Activated CD4-positive, alpha-beta T cell treated with anti-CD3 and anti-CD28 coated beads, Interleukin-2, amount 10 ng/mL, durations not matched to agents 24 days and 14 days (primary cell): ENCODE measurements at regions of chr9 and their contacts with region 1.

Region 1: GRCh38 chr9:120714088-120714845 is at the start of gene MEGF9:
- DNase-seq: peak; percentile 99
- H3K4me3 Mint-ChIP-seq: peak within 1 kb of the TSS; percentile 94
- H3K27ac Mint-ChIP-seq: peak within 1 kb of the TSS; percentile 88
- H3K4me1 Mint-ChIP-seq: peaks cover 36% of the 10 kb centered on the region
- H3K27me3 Mint-ChIP-seq: no peaks in the 10 kb centered on the region
- total RNA-seq, gene MEGF9: 4.5 and 4.9 TPM in 2 replicates

Region 2: DNA sequence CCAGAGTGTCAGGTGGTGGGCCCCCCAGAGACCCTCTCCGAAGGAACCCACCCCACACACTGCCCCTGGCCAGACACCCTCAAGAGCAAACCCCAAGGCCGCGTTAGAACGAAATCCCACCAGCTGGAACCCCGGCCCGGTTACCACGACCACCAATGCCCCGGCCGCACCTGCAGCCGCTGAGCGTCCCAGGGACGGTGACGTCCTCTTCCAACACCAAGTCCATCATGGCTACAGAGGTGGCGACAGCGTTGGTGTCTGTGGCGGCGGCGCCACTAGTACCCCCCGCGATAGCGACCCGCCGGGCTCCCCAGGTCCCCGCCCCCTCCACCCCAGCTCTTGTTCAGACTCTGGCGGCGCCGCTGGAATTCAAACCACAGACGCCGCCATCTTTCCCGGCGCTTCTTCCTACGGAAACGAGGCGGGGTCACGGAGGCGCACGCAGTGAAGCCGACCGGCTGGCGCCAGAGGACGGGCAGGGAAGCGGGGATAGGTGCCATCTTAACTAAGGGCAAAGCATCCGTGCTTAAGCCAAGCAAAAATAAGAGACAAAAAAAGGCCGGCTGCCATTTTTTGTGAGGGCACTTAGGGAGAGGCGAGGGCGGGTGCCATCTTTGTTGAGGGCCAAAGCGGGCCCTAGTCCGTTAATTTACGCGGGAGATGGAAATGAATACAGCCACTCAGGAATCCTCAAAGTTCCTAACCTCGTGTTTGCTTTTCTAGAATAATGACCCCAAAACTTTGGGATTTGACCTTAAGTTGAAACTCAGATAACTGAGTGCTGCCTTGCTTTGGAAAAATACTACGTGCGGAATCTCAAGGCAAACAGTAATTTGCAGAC is 134.3 kb before region 1 on chr9 and contains the start of gene CDK5RAP2:
- intact Hi-C with region 1: loop called (anchors 1 kb)
- DNase-seq: peak; percentile 98
- H3K4me3 Mint-ChIP-seq: peak within 1 kb of the TSS; percentile 98
- H3K27ac Mint-ChIP-seq: peak within 1 kb of the TSS; percentile 94
- H3K4me1 Mint-ChIP-seq: peaks cover 36% of the 10 kb centered on the region
- H3K27me3 Mint-ChIP-seq: no peaks in the 10 kb centered on the region
- total RNA-seq, gene CDK5RAP2: 69.3 and 70.0 TPM in 2 replicates

Region 3: GRCh38 chr9:120692901-120693699 is 21.2 kb before region 1 on chr9:
- intact Hi-C with region 1: loop called (anchors 2 kb)
- DNase-seq: peak; percentile 53
- H3K4me3 Mint-ChIP-seq: no peak overlapping the region
- H3K27ac Mint-ChIP-seq: no peak overlapping the region
- H3K4me1 Mint-ChIP-seq: peaks cover 29% of the 10 kb centered on the region
- H3K27me3 Mint-ChIP-seq: no peaks in the 10 kb centered on the region

Region 4: DNA sequence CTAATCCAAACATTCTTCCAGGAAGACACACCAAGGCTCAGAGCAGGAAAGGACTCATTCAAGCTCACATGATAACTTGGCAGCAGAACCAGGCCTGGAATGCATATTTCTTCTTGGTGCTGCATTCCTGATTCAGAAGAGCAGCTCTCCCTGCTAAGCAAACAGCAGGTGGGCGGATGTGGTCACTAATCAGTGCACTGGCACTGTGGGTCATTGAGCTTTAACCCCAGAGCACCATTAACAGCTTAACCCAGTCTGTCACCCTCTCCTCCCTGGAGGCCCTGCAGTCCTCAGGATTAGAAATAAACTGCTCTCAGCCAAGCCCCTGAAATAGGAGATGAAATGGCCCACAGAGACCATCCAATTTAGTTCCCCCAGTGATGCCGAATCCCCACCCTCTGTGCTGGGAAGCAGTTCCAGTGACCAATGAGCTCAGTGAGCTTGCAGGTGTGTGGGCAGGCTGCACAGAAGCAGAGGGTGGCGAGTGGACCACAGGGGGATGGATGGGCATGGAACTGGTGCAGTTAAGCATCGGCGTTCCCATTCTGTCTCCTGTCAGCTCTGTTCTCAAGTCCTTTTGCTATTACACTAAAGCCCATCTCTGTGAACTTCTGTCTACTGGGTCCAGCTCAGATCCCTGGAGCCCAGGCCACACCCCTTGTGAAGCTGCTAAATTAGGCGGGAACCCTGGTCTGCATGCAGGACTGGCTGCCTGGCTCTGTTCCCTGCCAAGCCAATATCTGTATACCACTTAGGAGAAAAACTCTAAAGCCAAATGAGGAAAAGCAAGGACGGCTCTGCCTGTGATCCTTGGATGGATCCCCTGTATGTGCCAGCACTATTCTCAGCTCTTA is 16.6 kb after region 1 on chr9:
- intact Hi-C with region 1: no loop called
- DNase-seq: no peak
- H3K4me3 Mint-ChIP-seq: no peak overlapping the region
- H3K27ac Mint-ChIP-seq: no peak overlapping the region
- H3K4me1 Mint-ChIP-seq: peaks cover 14% of the 10 kb centered on the region
- H3K27me3 Mint-ChIP-seq: no peaks in the 10 kb centered on the region

Region 5: DNA sequence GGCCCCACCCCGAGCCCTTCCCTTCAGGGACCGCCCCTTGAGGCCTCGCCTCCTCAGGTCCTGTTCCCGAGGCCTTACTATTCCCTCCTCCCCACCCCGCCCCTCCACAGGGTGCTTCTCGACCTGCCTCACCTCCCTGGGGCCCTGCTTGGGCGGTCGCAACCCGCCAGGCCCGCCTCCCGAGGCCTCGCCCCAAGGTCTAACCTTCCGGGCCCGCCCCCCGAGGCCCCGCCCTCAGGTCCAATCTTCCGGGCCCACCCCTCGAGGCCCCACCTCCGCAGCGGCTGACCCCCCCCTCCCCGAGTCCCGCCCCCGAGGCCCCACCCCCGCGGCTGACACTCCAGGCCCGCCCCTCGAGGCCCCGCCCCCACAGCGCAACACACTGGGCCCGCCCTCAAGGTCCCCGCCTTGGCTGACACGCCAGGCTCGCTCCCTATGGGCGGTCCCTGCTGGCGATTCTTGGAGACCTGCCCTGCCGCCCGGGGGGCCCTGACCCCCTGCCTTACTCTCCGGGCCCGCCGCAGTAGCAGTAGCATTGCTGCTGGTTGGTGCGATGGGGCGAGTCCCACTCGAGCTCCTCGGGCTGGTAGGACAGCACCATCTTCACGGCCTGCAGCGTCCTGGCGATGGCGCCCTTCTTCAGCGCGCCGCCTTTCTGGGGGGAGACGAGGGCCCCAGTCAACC is 154.6 kb after region 1 on chr9:
- intact Hi-C with region 1: loop called (anchors 5 kb)
- DNase-seq: peak; percentile 98
- H3K4me3 Mint-ChIP-seq: peak overlapping the region; percentile 90
- H3K27ac Mint-ChIP-seq: peak overlapping the region; percentile 95
- H3K4me1 Mint-ChIP-seq: peaks cover 40% of the 10 kb centered on the region
- H3K27me3 Mint-ChIP-seq: no peaks in the 10 kb centered on the region

Region 6: DNA sequence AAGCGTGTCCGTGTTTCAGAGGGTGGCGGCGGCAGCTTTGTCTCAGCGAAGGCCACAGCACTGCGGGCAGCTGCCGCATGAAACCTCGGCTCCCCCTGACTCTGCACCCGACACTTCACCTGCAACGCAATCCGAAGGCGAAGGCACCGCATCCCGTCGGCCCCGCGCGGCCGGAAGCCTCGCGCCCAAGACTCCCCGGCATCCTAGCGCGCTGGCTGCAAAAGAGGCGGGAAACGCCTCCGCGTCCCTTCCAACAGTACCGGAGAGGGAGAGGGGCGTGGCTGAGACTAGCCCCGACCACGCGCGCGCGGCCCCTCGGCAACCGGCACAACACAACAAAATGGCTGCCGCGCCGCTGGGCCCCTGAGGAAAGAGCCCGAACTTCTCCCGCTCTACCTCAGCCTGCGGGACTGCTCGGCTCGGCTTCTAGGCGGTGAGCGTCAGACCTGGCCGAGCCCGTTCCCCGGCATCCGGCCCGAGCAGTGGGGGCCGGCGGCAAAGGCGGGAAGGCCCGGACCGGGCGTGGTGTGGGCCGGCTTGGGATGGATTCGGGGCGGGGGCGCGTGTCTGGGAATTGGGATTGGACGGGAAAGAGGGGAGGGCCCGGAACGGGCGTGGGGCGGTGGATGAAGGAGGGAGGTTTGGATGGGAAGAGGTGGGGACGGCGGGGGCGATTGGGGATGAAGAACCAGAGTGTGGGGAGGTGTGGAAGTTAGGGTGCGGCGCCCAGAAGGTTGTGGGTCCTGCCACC is 360.5 kb after region 1 on chr9 and contains the start of gene CNTRL:
- intact Hi-C with region 1: loop called (anchors 5 kb)
- DNase-seq: peak; percentile 97
- H3K4me3 Mint-ChIP-seq: peak within 1 kb of the TSS; percentile 100
- H3K27ac Mint-ChIP-seq: peak within 1 kb of the TSS; percentile 98
- H3K4me1 Mint-ChIP-seq: peaks cover 52% of the 10 kb centered on the region
- H3K27me3 Mint-ChIP-seq: no peaks in the 10 kb centered on the region
- total RNA-seq, gene CNTRL: 68.3 and 69.4 TPM in 2 replicates

Region 7: DNA sequence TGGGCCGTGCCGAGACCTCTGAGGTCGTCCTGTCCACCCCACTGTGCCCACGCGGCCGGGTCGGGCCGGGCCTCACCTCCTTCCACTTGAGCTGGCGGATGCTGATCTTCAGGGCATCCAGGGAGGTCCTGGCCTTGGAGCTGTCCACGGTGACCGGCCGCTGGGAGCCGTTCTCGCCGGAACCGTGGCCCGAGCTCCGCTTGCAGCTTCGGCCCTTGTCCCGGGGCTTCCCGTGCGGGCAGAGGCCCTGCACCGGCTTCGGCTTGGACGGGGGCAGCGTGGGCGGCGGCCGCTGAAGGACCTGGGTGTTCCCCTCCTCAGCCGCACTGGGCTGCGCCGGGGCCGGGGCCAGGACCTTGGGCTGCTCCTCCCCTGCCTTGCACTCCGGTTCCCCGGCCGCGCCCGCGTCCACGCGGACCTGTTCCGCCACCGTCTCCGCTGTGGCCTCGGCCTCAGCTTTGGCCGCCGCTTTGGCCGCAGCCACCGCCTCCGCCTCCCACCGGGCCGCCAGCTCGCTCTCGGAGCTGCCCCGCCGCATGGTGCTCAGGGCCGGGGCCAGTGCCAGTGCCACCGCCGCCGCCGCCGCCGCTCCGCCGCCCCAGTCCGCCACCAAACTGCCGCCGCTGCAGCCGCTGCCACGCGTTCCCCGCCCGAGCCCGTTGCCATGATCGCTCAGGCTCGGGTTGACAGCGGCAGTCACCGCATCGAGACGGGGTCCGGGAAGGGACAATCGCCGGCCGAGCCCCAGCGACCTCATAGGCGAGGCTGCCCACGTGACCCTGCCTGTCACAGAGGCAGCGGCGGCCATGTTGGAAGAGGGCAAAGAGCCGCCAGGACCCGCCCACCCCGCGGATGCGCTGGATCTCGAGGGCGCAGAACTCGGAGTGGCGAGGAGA is 1378.6 kb after region 1 on chr9 and contains the start of gene TTLL11:
- intact Hi-C with region 1: loop called (anchors 10 kb)
- DNase-seq: peak; percentile 99
- H3K4me3 Mint-ChIP-seq: peak within 1 kb of the TSS; percentile 81
- H3K27ac Mint-ChIP-seq: peak within 1 kb of the TSS; percentile 82
- H3K4me1 Mint-ChIP-seq: peaks cover 34% of the 10 kb centered on the region
- H3K27me3 Mint-ChIP-seq: peaks cover 21% of the 10 kb centered on the region
- total RNA-seq, gene TTLL11: 2.4 and 2.8 TPM in 2 replicates